ENCODE measurements at regions of chr16 and their contacts with region 1.

Region 1: DNA sequence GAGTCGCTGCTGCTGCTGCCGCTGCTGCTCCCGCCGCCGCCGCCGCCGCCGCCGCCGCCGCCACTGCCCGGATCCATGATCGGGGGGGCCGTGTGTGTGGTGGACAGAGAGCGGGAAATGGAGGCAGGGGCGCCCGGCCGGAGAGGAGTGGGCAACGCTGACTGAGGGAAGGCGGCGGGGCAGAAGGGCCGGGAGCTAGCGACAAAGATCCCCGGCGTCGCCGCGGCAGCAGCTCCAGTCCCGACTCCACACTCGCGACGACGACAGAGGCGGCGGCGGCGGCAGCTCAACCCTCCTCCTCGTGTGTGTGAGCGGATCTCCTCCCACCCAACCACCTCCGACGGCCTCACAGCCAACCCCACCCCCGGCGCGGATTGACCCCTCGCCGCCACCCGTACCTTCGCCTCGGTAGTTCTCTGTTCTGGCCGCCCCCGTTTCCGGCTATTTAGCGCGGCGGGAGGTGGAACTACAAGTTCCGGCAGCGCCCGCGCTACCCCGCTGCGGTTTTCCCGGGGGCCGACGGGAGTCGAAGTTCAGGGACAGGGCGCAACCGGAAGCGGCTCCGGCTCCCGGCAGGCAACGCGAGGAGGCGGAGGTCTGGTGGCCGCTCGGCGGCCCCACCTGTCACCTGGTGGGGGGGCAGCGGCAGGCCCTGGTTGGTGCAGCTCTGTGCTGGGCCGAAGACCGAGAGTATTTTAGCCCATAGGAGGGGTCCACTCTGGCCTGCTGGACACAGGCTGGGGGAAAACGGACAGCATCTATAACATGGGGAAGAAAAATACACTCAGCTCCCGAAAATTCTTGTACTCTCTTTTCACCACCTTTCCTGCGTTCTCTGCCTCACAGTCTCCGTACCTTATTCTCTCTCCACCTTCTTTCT is at the start of gene GSPT1:
- H3K4me3 Mint-ChIP-seq: peak within 1 kb of the TSS; percentile 89
- H3K27ac Mint-ChIP-seq: peak within 1 kb of the TSS; percentile 91
- H3K4me1 Mint-ChIP-seq: peaks cover 27% of the 10 kb centered on the region
- H3K27me3 Mint-ChIP-seq: peaks cover 10% of the 10 kb centered on the region

Region 2: DNA sequence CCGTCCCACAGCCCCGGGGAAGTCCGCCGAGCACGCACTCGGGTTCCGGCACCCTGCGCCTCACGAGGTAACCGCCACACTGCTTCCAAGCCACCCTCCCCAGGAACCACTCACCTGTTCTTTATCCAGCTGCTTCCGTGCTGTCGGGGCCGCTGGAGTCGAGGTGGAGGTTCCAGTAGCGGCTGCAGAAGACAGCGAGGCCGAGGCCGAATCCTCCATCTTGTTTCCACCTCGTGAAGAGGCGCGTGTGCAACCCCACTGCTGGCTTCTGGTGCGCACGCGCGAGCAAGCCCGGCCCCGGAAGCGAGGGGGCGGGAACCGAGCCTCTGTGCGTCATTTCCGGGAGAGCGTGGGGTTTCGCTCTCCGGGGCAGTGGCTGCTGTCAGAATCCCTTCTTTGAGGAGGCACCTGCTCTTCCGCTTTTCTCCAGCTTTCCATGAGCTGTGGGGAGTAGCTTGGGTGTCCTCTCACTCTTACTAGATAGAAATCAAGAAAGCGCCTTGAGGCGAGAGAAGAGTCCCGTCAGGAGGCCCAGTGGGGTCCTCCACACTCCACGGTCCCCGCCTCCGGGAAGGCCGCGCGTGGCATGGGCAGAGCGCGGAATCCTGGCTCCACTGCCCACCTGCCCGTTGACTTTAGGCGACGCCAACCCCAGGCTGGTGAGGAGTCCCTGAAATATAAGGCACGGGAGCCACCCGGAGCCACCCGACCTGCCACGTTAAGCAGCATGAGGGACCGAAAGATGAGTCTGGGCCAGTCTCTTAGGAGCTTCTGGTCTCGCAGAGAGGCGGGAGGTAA is 64.4 kb before region 1 on chr16 and contains the start of gene RSL1D1:
- intact Hi-C with region 1: loop called (anchors 5 kb)
- H3K4me3 Mint-ChIP-seq: peak within 1 kb of the TSS; percentile 90
- H3K27ac Mint-ChIP-seq: peak within 1 kb of the TSS; percentile 94
- H3K4me1 Mint-ChIP-seq: peaks cover 39% of the 10 kb centered on the region
- H3K27me3 Mint-ChIP-seq: no peaks in the 10 kb centered on the region